ENCODE measurements at regions of chr3 and their contacts with region 1.

Region 1: GRCh38 chr3:19866751-19867347 is 67.2 kb downstream of the EFHB start:
- DNase-seq: peak in 1 of 2 experiments; percentile 49
- H3K4me3 ChIP-seq: no peak overlapping the region
- H3K27ac ChIP-seq: no peak overlapping the region
- H3K4me1 ChIP-seq: no peaks in the 10 kb centered on the region
- H3K27me3 ChIP-seq: no peaks in the 10 kb centered on the region
- CTCF ChIP-seq: peak; percentile 89

Region 2: DNA sequence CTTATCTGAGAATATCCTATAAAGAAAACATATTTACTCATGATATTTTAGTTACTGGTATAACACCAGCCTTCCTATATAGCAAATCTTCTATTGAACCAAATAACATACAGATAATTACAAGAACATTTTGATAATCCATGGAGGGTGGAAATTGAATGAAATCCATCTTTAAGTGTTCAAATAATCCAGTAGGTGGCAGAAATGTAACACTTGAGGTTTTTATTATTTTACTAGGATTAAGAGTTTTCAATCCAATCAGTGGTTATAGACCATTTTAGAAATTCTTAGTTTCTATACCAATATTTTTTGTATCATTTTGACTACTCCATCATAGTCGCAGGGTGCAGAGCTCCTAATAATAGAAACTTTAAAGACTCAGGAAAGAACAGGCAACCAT is 820.4 kb before region 1 on chr3:
- CTCF ChIA-PET with region 1: no interaction called
- POLR2A ChIA-PET with region 1: no interaction called
- intact Hi-C with region 1: loop called (anchors 5 kb)
- DNase-seq: no peak
- H3K4me3 ChIP-seq: no peak overlapping the region
- H3K27ac ChIP-seq: no peak overlapping the region
- H3K4me1 ChIP-seq: no peaks in the 10 kb centered on the region
- H3K27me3 ChIP-seq: no peaks in the 10 kb centered on the region
- CTCF ChIP-seq: peak; percentile 59; the same call in 1 of the 2 replicates

Region 3: DNA sequence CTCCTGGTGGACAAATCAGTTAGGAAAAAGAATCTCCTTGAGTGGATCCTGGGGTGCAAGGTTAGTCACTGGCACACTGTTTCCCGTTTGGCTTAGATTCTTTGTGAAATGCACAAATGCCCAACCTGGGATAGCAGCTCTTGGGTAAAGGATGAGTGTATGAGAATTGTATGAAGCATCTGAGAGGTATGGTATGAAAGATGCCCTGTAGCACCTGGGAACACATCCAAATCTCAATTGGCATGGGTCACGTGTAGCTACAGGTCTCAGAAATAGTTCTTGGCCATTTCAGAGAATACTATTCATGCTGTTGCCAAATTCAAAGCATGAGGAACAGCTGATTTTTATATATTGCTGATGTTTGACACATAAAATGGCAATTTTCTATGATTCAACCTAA is 634.3 kb before region 1 on chr3:
- CTCF ChIA-PET with region 1: no interaction called
- POLR2A ChIA-PET with region 1: no interaction called
- intact Hi-C with region 1: loop called (anchors 10 kb)
- DNase-seq: no peak
- H3K4me3 ChIP-seq: no peak overlapping the region
- H3K27ac ChIP-seq: no peak overlapping the region
- H3K4me1 ChIP-seq: no peaks in the 10 kb centered on the region
- H3K27me3 ChIP-seq: no peaks in the 10 kb centered on the region
- CTCF ChIP-seq: no peak

Region 4: GRCh38 chr3:19725000-19725399 is 141.8 kb before region 1 on chr3:
- CTCF ChIA-PET with region 1: no interaction called
- POLR2A ChIA-PET with region 1: no interaction called
- intact Hi-C with region 1: no loop called
- DNase-seq: no peak
- H3K4me3 ChIP-seq: no peak overlapping the region
- H3K27ac ChIP-seq: no peak overlapping the region
- H3K4me1 ChIP-seq: no peaks in the 10 kb centered on the region
- H3K27me3 ChIP-seq: no peaks in the 10 kb centered on the region
- CTCF ChIP-seq: no peak